Activated T-helper 1 cell treated with anti-CD3 and anti-CD28 coated beads, Interleukin-12 subunit alpha, Interleukin-12 subunit beta, Interleukin-2, Interleukin-4 antibody, amounts not matched to agents 30 ng/mL and 10 ng/mL and 1 ng/mL, durations not matched to agents 14 hours and 24 hours and 36 hours (primary cell): ENCODE measurements at regions of chr9 and their contacts with region 1.

Region 1: GRCh38 chr9:100411472-100412283 is 15.3 kb upstream of the MSANTD3 start:
- DNase-seq: peak; percentile 81
- H3K4me3 Mint-ChIP-seq: peak overlapping the region; percentile 83
- H3K27ac Mint-ChIP-seq: peak overlapping the region; percentile 65
- H3K4me1 Mint-ChIP-seq: peaks cover 13% of the 10 kb centered on the region
- H3K27me3 Mint-ChIP-seq: peaks cover 11% of the 10 kb centered on the region

Region 2: DNA sequence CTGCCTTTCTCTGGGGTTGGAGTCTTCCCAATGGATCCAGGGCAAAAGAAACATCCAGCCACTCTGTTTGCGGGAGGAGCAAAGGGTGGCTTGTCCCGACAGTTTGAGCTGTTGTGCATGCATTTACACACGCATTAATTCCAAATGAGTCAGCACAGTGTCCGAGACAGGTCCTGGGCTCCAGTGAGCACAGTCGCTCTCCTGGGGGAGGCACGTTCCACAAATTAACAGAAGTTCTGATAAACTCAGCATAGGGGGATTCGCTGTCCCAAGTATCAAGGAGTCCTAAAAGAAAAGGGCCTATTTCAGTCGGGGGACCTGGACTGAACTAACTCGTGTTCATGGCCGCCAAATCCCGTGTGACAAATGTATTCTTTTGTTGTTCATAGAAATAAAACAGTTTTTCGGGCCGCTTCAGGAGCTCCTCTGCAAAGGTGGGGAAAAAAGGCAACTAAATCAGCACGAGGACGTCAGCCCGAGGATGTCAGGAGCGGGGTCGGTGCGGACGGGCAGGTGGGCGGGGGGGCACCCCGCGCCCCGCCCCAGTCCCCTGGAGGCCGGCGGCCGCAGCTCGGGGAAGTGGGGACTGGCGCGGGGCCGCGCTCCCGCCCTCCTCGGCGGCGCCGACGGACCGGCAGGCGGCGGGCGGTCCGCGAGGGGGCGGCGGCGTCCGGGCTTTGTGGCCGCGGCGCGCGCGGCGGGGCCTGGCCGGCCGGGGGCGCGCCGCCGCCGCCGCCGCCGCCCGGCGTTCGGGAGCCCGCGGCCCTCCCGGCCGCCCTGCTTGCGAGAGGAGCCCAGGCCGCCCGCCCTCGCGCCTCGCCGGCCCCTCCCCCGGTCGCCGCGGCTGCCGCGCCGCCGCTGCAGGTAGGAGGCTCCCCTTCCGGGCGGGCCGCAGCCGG is 15.1 kb after region 1 on chr9 and contains the start of gene MSANTD3:
- intact Hi-C with region 1: loop called (anchors 1 kb)
- DNase-seq: peak; percentile 28
- H3K4me3 Mint-ChIP-seq: peak within 1 kb of the TSS; percentile 87
- H3K27ac Mint-ChIP-seq: peak within 1 kb of the TSS; percentile 91
- H3K4me1 Mint-ChIP-seq: peaks cover 21% of the 10 kb centered on the region
- H3K27me3 Mint-ChIP-seq: peaks cover 10% of the 10 kb centered on the region
- total RNA-seq, gene MSANTD3: 11.1 and 11.3 TPM in 2 replicates